Naive thymus-derived CD4-positive, alpha-beta T cell (primary cell): ENCODE measurements at regions of chr15 and their contacts with region 1.

Region 1: GRCh38 chr15:28947221-28947674 is 61.5 kb downstream of the APBA2 start:
- DNase-seq: no peak
- ATAC-seq: no peak
- H3K4me3 ChIP-seq: peak overlapping the region; percentile 50
- H3K4me3 Mint-ChIP-seq: peak overlapping the region in 9 of 10 donors; percentile 47 to 89 (median 81)
- H3K27ac ChIP-seq: peak overlapping the region; percentile 62
- H3K27ac Mint-ChIP-seq: peak overlapping the region in 8 of 9 donors; percentile 87 to 99 (median 95)
- H3K4me1 ChIP-seq: peaks cover 25 to 65% of the 10 kb centered on the region in 2 donors
- H3K4me1 Mint-ChIP-seq: peaks cover 18 to 93% (median 85%) of the 10 kb centered on the region in 7 donors
- H3K27me3 ChIP-seq: no peaks in the 10 kb centered on the region
- H3K27me3 Mint-ChIP-seq: peaks cover 0 to 6% (median 0%) of the 10 kb centered on the region in 5 donors

Region 2: GRCh38 chr15:28963711-28964081 is 16.4 kb after region 1 on chr15:
- CTCF ChIA-PET with region 1: no interaction called
- POLR2A ChIA-PET with region 1: interaction called, 3 read pairs
- intact Hi-C with region 1: loop called in 1 of 2 experiments (anchors 2 kb)
- DNase-seq: no peak
- ATAC-seq: no peak
- H3K4me3 ChIP-seq: no peak overlapping the region
- H3K4me3 Mint-ChIP-seq: no peak overlapping the region
- H3K27ac ChIP-seq: no peak overlapping the region
- H3K27ac Mint-ChIP-seq: peak overlapping the region in 3 of 9 donors; percentile 18 to 54 (median 34)
- H3K4me1 ChIP-seq: no peaks in the 10 kb centered on the region
- H3K4me1 Mint-ChIP-seq: peaks cover 0 to 72% (median 60%) of the 10 kb centered on the region in 7 donors
- H3K27me3 ChIP-seq: no peaks in the 10 kb centered on the region
- H3K27me3 Mint-ChIP-seq: peaks cover 0 to 1% (median 0%) of the 10 kb centered on the region in 5 donors